Psoas muscle (tissue), 8 donors: ENCODE measurements at regions of chr3 and their contacts with region 1.

Region 1: DNA sequence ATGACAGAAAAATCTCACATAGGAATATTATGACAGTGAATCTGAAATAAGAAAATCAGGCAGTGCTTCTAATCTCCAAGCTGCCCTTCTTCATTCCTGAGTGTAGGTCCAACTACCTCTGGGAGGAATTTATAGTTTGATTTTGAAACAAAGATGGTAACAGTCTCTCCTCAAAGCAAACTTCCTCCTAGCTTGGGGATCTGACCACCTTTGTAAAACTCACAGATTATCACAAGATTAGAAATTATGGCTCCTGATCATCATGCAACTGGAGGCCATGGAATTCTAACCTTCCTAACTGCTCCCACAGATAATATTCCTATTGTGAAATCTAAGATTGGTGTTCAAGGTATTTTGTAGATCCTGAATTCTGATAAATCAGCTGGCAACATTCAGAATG is 7.4 kb downstream of the OR5H14 start:
- DNase-seq: no peak
- ATAC-seq: no peak
- H3K4me3 ChIP-seq: no peak overlapping the region
- H3K27ac ChIP-seq: no peak overlapping the region
- H3K4me1 ChIP-seq: no peaks in the 10 kb centered on the region
- H3K27me3 ChIP-seq: no peaks in the 10 kb centered on the region
- CTCF ChIP-seq: no peak

Region 2: DNA sequence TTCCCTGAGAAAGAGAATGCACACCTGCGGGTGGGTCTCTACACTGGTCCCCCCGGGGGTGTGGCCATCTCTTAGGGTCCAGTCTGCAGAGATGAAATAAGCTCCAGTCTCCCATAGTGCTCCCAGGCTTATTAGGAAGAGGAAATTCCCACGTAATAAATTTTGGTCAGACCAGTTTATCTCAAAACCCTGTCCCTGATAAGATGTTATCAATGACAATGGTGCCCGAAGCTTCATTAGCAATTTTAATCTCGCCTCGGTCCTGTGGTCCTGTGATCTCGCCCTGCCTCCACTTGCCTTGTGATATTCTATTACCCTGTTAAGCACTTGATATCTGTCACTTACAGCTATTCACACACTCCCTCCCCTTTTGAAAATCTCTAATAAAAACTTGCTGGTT is 58.6 kb after region 1 on chr3:
- intact Hi-C with region 1: loop called in 1 of 2 experiments (anchors 2 kb)
- DNase-seq: no peak
- ATAC-seq: no peak
- H3K4me3 ChIP-seq: no peak overlapping the region
- H3K27ac ChIP-seq: no peak overlapping the region
- H3K4me1 ChIP-seq: no peaks in the 10 kb centered on the region
- H3K27me3 ChIP-seq: no peaks in the 10 kb centered on the region
- CTCF ChIP-seq: no peak